ENCODE measurements at regions of chr5 and their contacts with region 1.

Region 1: GRCh38 chr5:127757576-127757975 is 54.4 kb downstream of the CCDC192 start:
- DNase-seq: peak; percentile 79
- H3K4me3 Mint-ChIP-seq: no peak overlapping the region
- H3K27ac Mint-ChIP-seq: no peak overlapping the region
- H3K4me1 Mint-ChIP-seq: no peaks in the 10 kb centered on the region
- H3K27me3 Mint-ChIP-seq: peaks cover 11% of the 10 kb centered on the region

Region 2: DNA sequence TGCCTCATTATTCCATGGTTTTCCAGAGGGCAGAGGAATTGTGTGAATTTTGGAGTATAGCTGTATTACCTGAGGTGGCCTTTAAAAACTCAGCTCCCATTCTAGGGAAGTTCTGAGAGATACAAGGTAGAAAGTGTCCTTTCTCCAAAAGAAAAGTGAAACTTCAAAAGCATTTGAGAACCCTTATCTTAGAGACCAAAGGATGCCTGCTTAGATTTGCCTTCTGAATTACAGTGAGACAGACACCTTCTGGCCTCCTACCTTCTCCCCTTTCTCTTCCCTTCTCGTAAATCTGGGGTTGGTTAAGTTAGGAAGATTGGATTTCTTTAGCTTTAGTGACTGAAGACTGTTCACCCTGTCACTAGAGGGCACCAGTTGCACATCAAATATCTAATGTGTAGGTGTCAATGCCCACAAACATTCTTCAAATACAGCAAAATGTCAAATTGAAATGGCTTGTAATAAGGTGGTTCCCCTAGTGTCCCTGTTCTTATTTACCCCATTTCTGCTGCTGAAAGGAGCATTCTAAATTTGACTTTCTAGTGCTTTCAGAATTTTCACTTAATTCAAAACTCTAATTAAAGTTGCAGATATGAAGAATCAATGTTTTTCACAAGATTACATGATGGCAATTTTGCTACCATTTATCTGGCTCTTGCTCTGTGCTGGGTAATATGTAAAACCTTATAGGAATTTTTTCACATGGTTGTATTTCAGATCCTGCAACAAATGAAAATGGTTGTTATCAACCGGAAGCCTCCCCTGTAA is 193.4 kb before region 1 on chr5:
- intact Hi-C with region 1: loop called (anchors 10 kb)
- DNase-seq: peak; percentile 83
- H3K4me3 Mint-ChIP-seq: no peak overlapping the region
- H3K27ac Mint-ChIP-seq: no peak overlapping the region
- H3K4me1 Mint-ChIP-seq: peaks cover 8% of the 10 kb centered on the region
- H3K27me3 Mint-ChIP-seq: peaks cover 25% of the 10 kb centered on the region

Region 3: GRCh38 chr5:127892467-127893207 is 135.1 kb after region 1 on chr5:
- intact Hi-C with region 1: no loop called
- DNase-seq: no peak
- H3K4me3 Mint-ChIP-seq: no peak overlapping the region
- H3K27ac Mint-ChIP-seq: no peak overlapping the region
- H3K4me1 Mint-ChIP-seq: no peaks in the 10 kb centered on the region
- H3K27me3 Mint-ChIP-seq: peaks cover 8% of the 10 kb centered on the region